Vagina (tissue), 2 donors: ENCODE measurements at regions of chr1 and their contacts with region 1.

Region 1: DNA sequence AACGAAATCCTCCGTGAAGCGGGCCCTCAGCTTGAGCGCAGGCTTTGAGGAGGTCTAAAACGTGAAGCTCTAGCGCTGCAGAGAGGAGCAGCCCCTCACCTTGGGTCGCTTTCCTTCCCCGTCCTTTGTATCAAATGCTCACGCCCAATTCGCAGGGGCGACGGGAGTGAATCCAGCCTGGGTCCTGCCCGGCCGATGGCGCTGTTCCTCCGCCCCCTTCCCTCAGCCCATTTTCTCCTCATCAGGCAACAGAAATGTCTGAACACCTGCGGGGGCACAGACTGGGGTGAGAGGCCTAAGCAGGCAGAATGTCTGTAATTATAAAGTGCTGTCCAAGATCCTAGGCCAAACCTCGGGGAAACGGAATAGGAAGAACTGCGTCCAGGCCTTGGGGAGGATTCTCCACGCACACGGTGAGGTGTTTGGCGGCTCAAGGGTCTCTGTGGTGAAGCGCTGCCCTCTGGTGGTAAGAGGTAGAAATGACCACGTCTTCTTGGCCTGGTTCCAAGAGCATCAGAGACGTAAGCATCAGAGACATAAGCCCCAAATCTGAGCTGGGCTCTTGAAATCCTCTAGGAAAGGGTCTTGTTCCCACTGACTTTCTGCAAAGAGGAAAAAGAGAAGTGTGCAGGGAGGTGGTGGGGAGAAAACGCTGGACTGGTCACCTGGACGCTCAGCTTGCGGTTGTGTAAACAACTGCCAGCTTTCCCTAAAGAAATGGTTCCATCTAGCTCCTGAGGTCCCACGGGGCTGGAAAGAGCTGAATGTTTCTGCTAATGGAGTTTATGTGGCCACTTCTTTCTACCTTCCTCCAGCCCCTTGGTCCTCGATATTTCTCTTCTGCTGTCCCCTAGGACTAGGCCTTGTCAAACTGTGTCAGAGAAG is 92.1 kb upstream of the CD53 start:
- DNase-seq: no peak
- H3K4me3 ChIP-seq: no peak overlapping the region
- H3K27ac ChIP-seq: no peak overlapping the region
- H3K4me1 ChIP-seq: peaks cover 8% of the 10 kb centered on the region
- H3K27me3 ChIP-seq: no peaks in the 10 kb centered on the region
- CTCF ChIP-seq: peak; percentile 42 to 66 (median 62)
- POLR2A ChIP-seq: no peak

Region 2: GRCh38 chr1:110619412-110620249 is 161.2 kb before region 1 on chr1:
- intact Hi-C with region 1: loop called (anchors 5 kb)
- DNase-seq: no peak
- H3K4me3 ChIP-seq: peak overlapping the region in 1 of 2 donors; percentile 23
- H3K27ac ChIP-seq: no peak overlapping the region
- H3K4me1 ChIP-seq: no peaks in the 10 kb centered on the region
- H3K27me3 ChIP-seq: no peaks in the 10 kb centered on the region
- CTCF ChIP-seq: peak; percentile 69 to 87 (median 84)
- POLR2A ChIP-seq: no peak

Region 3: GRCh38 chr1:110630839-110631663 is 149.8 kb before region 1 on chr1:
- intact Hi-C with region 1: loop called (anchors 5 kb)
- DNase-seq: peak; percentile 85 to 94
- H3K4me3 ChIP-seq: no peak overlapping the region
- H3K27ac ChIP-seq: no peak overlapping the region
- H3K4me1 ChIP-seq: peaks cover 20% of the 10 kb centered on the region
- H3K27me3 ChIP-seq: no peaks in the 10 kb centered on the region
- CTCF ChIP-seq: peak; percentile 77 to 93 (median 88)
- POLR2A ChIP-seq: no peak